CD4-positive, alpha-beta T cell (primary cell): ENCODE measurements at regions of chr19 and their contacts with region 1.

Region 1: DNA sequence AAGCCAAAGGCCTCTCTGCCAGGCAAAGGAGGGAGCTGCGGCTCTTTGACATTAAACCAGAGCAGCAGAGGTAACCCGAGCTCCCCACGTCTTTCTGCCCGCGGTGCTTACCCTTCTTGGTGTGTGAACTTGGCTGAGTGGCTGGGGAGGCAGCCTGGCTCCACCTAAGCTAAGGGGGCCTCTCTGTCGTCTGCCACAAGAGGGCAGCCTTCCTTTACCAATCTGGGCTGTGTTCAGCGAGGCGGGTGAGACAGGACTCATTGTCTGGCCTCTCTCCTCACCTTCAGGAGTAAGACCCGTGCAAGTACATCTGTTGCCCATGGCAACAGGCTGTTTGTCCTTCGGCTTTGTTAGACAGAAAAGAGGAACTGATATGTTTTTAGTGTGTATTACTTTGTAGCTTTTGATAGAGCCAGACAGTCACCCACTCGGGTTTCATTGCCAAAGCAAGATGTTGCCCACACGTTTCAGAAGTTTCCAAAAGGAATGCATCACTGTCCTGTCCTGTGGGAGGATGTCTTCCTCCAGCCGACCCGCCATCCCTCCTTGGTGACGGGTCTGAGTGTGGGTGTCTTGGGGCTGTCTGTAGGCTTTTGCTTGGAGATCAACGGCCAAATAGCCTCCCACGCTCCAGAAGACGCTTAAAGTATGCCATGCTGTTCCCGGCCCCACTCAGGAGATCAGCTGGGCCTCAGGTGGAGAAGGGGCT is 4.6 kb downstream of the POP4 start:
- DNase-seq: peak; percentile 77 to 92 (median 81)
- ATAC-seq: peak; percentile 53
- H3K4me3 ChIP-seq: no peak overlapping the region
- H3K4me3 Mint-ChIP-seq: peak overlapping the region; percentile 52
- H3K27ac ChIP-seq: no peak overlapping the region
- H3K27ac Mint-ChIP-seq: peak overlapping the region; percentile 38
- H3K4me1 ChIP-seq: peaks cover 29% of the 10 kb centered on the region
- H3K4me1 Mint-ChIP-seq: peaks cover 29% of the 10 kb centered on the region
- H3K27me3 ChIP-seq: no peaks in the 10 kb centered on the region
- H3K27me3 Mint-ChIP-seq: no peaks in the 10 kb centered on the region
- CTCF ChIP-seq: peak; percentile 79

Region 2: GRCh38 chr19:27793644-27794493 is 1816.8 kb before region 1 on chr19:
- CTCF ChIA-PET with region 1: no interaction called
- POLR2A ChIA-PET with region 1: interaction called, 13 read pairs
- intact Hi-C with region 1: no loop called
- DNase-seq: peak; percentile 82 to 95 (median 88)
- ATAC-seq: peak; percentile 92
- H3K4me3 ChIP-seq: peak overlapping the region; percentile 93
- H3K4me3 Mint-ChIP-seq: peak overlapping the region; percentile 98
- H3K27ac ChIP-seq: peak overlapping the region; percentile 78 to 84
- H3K27ac Mint-ChIP-seq: peak overlapping the region; percentile 86
- H3K4me1 ChIP-seq: peaks cover 26% of the 10 kb centered on the region
- H3K4me1 Mint-ChIP-seq: peaks cover 31% of the 10 kb centered on the region
- H3K27me3 ChIP-seq: no peaks in the 10 kb centered on the region
- H3K27me3 Mint-ChIP-seq: no peaks in the 10 kb centered on the region
- CTCF ChIP-seq: no peak

Region 3: GRCh38 chr19:29121684-29122083 is 489.0 kb before region 1 on chr19:
- CTCF ChIA-PET with region 1: no interaction called
- POLR2A ChIA-PET with region 1: no interaction called
- intact Hi-C with region 1: no loop called
- DNase-seq: no peak
- ATAC-seq: no peak
- H3K4me3 ChIP-seq: no peak overlapping the region
- H3K4me3 Mint-ChIP-seq: no peak overlapping the region
- H3K27ac ChIP-seq: no peak overlapping the region
- H3K27ac Mint-ChIP-seq: no peak overlapping the region
- H3K4me1 ChIP-seq: no peaks in the 10 kb centered on the region
- H3K4me1 Mint-ChIP-seq: no peaks in the 10 kb centered on the region
- H3K27me3 ChIP-seq: peaks cover 0 to 3% of the 10 kb centered on the region in 2 experiments
- H3K27me3 Mint-ChIP-seq: peaks cover 10% of the 10 kb centered on the region
- CTCF ChIP-seq: no peak

Region 4: GRCh38 chr19:29665215-29665825 is 54.6 kb after region 1 on chr19 and contains the start of gene PLEKHF1:
- CTCF ChIA-PET with region 1: interaction called, 33 read pairs
- POLR2A ChIA-PET with region 1: interaction called, 104 read pairs
- intact Hi-C with region 1: loop called in 1 of 2 experiments (anchors 2 kb)
- DNase-seq: peak; percentile 52 to 91 (median 78)
- ATAC-seq: peak; percentile 63
- H3K4me3 ChIP-seq: peak within 1 kb of the TSS; percentile 97
- H3K4me3 Mint-ChIP-seq: peak within 1 kb of the TSS; percentile 93
- H3K27ac ChIP-seq: peak within 1 kb of the TSS; percentile 67 to 85
- H3K27ac Mint-ChIP-seq: peak within 1 kb of the TSS; percentile 98
- H3K4me1 ChIP-seq: peaks cover 58% of the 10 kb centered on the region
- H3K4me1 Mint-ChIP-seq: peaks cover 76% of the 10 kb centered on the region
- H3K27me3 ChIP-seq: no peaks in the 10 kb centered on the region
- H3K27me3 Mint-ChIP-seq: no peaks in the 10 kb centered on the region
- CTCF ChIP-seq: peak; percentile 17
- total RNA-seq, gene PLEKHF1: 37.5 to 41.0 TPM

Region 5: DNA sequence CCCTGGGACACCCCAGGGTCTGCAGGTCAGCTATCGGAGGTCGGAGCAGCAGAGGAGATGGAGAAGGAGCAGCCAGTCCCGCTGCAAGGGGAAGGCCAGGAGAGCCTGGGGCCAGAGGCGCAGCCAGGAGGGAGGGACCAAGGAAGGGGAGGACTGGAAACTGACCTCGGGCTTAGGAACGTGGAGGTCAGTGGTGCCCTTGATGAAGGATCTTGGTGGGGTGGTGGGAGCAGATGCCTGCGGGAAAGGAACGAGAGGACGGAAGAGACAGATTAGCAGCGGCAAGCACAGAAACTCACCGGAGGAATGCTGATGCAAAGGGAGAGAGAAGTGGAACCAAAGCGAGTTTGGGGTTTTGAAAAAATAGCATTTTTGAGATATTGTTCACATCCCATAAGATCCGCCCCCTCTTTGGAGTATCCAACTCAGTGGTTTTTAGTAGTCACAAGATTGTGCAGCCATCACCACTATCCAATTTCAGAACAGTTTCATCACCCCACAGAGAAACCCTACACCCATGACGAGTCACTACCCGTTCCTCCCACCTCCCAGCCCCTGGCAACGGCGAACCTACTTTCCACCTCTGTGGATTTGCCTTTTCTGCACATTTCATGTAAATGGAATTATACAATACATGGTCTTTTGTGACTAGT is 76.7 kb after region 1 on chr19:
- CTCF ChIA-PET with region 1: interaction called, 12 read pairs
- POLR2A ChIA-PET with region 1: interaction called, 19 read pairs
- intact Hi-C with region 1: loop called (anchors 1 kb)
- DNase-seq: no peak
- ATAC-seq: no peak
- H3K4me3 ChIP-seq: no peak overlapping the region
- H3K4me3 Mint-ChIP-seq: no peak overlapping the region
- H3K27ac ChIP-seq: no peak overlapping the region
- H3K27ac Mint-ChIP-seq: no peak overlapping the region
- H3K4me1 ChIP-seq: peaks cover 25% of the 10 kb centered on the region
- H3K4me1 Mint-ChIP-seq: peaks cover 38% of the 10 kb centered on the region
- H3K27me3 ChIP-seq: no peaks in the 10 kb centered on the region
- H3K27me3 Mint-ChIP-seq: no peaks in the 10 kb centered on the region
- CTCF ChIP-seq: no peak

Region 6: DNA sequence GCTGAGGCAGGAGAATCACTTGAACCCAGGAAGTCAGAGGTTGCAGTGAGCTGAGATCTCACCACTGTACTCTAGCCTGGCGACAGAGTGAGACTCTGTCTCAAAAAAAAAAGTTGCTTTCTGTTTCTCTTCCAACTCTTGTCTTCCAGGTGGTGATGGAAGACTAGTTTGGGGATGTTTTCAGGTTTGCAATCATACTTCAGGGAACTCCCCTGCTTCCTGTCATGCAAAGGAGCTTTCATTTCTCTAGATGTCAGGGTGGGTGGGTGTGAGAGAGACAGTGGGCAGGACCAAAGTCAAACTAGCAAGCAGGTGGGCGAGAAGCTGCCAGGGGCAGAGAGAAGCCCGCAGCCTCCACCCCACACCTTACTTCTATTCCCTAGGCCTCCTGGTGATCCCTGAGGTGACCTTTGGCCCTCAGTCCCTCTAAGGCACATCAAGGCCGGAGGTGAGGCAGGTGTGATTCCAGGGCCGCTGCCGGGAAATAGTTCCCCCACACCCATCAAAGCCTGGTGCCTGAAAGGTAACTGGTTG is 226.8 kb after region 1 on chr19:
- CTCF ChIA-PET with region 1: no interaction called
- POLR2A ChIA-PET with region 1: interaction called, 15 read pairs
- intact Hi-C with region 1: loop called in 1 of 2 experiments (anchors 10 kb)
- DNase-seq: peak in 7 of 14 experiments; percentile 13 to 82 (median 37)
- ATAC-seq: peak; percentile 98
- H3K4me3 ChIP-seq: no peak overlapping the region
- H3K4me3 Mint-ChIP-seq: peak overlapping the region; percentile 81
- H3K27ac ChIP-seq: peak overlapping the region; percentile 47 to 59
- H3K27ac Mint-ChIP-seq: peak overlapping the region; percentile 92
- H3K4me1 ChIP-seq: peaks cover 37% of the 10 kb centered on the region
- H3K4me1 Mint-ChIP-seq: peaks cover 42% of the 10 kb centered on the region
- H3K27me3 ChIP-seq: no peaks in the 10 kb centered on the region
- H3K27me3 Mint-ChIP-seq: no peaks in the 10 kb centered on the region
- CTCF ChIP-seq: no peak

Region 7: DNA sequence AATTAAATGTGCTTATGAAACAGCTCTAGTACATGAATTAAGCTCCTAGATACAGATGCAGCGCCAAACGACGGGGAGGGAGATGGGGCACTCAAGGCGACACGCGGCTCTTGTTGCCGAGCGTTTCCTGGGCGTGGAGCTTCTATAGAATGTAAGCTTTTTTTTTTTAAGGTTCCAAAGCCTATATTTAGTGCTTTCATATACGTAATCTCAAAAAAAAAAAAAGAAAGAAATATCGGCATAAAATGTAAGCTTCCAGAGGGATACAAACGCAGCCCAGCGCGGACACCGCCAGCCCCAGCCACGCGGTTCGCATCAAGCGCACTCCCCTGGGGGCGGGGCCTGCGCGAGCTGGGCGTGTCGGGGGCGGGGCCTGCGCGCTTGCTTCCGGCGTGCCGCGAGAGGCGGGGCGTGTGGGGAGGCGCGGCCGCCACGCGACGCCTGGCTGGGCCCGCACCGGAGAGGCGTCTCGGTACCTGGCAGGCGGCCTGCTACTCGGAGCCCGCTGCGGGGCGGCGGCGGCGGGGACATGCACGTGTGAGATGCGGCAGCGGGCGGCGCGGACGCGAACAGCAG is 331.2 kb after region 1 on chr19 and contains the start of gene URI1:
- CTCF ChIA-PET with region 1: no interaction called
- POLR2A ChIA-PET with region 1: interaction called, 32 read pairs
- intact Hi-C with region 1: loop called in 1 of 2 experiments (anchors 2 kb)
- DNase-seq: peak; percentile 81 to 98 (median 93)
- ATAC-seq: peak; percentile 89
- H3K4me3 ChIP-seq: peak within 1 kb of the TSS; percentile 82
- H3K4me3 Mint-ChIP-seq: peak within 1 kb of the TSS; percentile 98
- H3K27ac ChIP-seq: peak within 1 kb of the TSS; percentile 12 to 67
- H3K27ac Mint-ChIP-seq: peak within 1 kb of the TSS; percentile 96
- H3K4me1 ChIP-seq: peaks cover 27% of the 10 kb centered on the region
- H3K4me1 Mint-ChIP-seq: peaks cover 53% of the 10 kb centered on the region
- H3K27me3 ChIP-seq: no peaks in the 10 kb centered on the region
- H3K27me3 Mint-ChIP-seq: no peaks in the 10 kb centered on the region
- CTCF ChIP-seq: no peak
- total RNA-seq, gene URI1: 50.9 to 63.6 TPM